Activated naive CD4-positive, alpha-beta T cell treated with anti-CD3 and anti-CD28 coated beads for 36 hours (primary cell): ENCODE measurements at regions of chr3 and their contacts with region 1.

Region 1: DNA sequence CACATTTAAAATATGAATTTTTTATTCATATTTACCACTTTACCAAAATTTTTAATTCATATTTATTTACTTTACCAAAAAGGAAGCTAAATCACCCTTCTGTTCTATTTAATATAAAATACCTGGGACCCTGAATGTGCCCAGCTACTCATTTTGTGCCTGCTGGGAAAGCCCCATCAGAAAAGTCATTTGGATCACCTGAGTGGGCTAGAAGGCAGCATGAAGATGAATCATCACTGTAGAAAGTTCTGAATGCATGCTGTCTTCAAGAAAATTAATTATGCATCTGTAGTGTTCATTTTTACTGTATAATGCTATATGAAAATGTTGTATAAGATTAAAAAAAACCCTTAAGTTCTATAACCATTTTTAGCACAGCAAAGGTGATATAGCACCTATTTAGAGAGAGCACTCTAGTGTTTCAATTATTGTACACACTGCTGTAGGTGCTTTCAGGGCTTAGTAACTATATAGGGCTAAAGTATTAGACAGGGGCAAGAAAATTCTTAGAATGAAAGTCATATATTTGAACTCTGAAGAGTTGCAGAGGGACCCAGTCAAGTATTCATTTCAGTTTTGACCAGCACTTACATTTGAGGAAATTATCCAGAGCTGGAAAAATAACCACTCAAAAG is 175.1 kb downstream of the NFKBIZ start:
- DNase-seq: peak; percentile 68
- H3K4me3 Mint-ChIP-seq: no peak overlapping the region
- H3K27ac Mint-ChIP-seq: no peak overlapping the region
- H3K4me1 Mint-ChIP-seq: peaks cover 27% of the 10 kb centered on the region
- H3K27me3 Mint-ChIP-seq: no peaks in the 10 kb centered on the region

Region 2: DNA sequence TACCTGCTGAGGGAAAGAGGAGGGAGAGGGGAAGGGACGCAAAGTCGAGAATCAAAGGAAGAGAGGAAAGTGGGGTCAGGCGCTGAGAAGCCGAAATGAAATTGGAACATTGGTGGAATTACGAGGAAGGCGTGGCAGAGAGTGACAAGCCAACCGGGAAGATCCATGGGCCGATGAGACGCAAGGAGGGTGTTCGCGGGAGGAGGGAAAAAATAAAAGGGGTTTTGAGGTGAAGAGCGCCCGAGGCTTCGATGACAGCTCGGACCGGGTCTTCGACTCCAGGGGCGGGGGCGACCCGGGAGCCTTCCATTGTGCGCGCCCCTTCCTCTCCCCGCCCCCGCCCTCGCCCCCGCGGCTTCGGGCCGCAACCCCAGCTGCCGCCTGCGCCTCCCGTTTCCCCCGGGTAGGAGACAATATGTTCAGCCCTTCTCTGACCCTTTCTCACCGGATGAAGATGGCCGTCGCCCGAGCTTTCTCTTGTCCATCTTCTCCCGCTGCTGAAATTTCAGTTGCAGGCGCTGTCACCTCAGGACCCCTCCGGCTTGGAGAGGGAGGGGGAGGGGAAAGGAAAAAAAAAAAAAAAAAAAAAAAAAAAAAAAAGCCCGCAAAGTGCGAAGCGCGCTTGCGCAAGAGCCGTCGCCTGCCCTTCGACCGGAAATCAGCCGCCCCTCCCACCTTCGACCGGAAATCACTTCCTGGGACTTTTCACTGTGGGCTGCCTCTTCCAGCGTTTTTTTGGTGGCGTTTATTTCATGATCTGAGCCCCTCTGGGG is 511.6 kb before region 1 on chr3 and contains the start of gene SENP7:
- CTCF ChIA-PET with region 1: no interaction called
- intact Hi-C with region 1: no loop called
- DNase-seq: peak; percentile 89
- H3K4me3 Mint-ChIP-seq: peak within 1 kb of the TSS; percentile 97
- H3K27ac Mint-ChIP-seq: peak within 1 kb of the TSS; percentile 97
- H3K4me1 Mint-ChIP-seq: peaks cover 50% of the 10 kb centered on the region
- H3K27me3 Mint-ChIP-seq: no peaks in the 10 kb centered on the region
- total RNA-seq, gene SENP7: 16.1 to 16.8 TPM

Region 3: GRCh38 chr3:102034639-102035451 is 10.5 kb after region 1 on chr3:
- CTCF ChIA-PET with region 1: interaction called, 3 read pairs
- intact Hi-C with region 1: loop called (anchors 1 kb)
- DNase-seq: no peak
- H3K4me3 Mint-ChIP-seq: no peak overlapping the region
- H3K27ac Mint-ChIP-seq: no peak overlapping the region
- H3K4me1 Mint-ChIP-seq: peaks cover 11% of the 10 kb centered on the region
- H3K27me3 Mint-ChIP-seq: no peaks in the 10 kb centered on the region